ENCODE measurements at regions of chr2 and their contacts with region 1.

Region 1: GRCh38 chr2:86808315-86809161 is 17.8 kb upstream of the CD8A start:
- DNase-seq: peak; percentile 96
- H3K4me3 Mint-ChIP-seq: peak overlapping the region; percentile 75
- H3K27ac Mint-ChIP-seq: no peak overlapping the region
- H3K4me1 Mint-ChIP-seq: peaks cover 17% of the 10 kb centered on the region
- H3K27me3 Mint-ChIP-seq: peaks cover 38% of the 10 kb centered on the region

Region 2: GRCh38 chr2:86221066-86221684 is 587.4 kb before region 1 on chr2:
- CTCF ChIA-PET with region 1: no interaction called
- intact Hi-C with region 1: loop called (anchors 1 kb)
- DNase-seq: peak; percentile 80
- H3K4me3 Mint-ChIP-seq: no peak overlapping the region
- H3K27ac Mint-ChIP-seq: no peak overlapping the region
- H3K4me1 Mint-ChIP-seq: peaks cover 16% of the 10 kb centered on the region
- H3K27me3 Mint-ChIP-seq: no peaks in the 10 kb centered on the region

Region 3: GRCh38 chr2:86396291-86396785 is 412.2 kb before region 1 on chr2:
- CTCF ChIA-PET with region 1: no interaction called
- intact Hi-C with region 1: loop called (anchors 10 kb)
- DNase-seq: peak; percentile 57
- H3K4me3 Mint-ChIP-seq: no peak overlapping the region
- H3K27ac Mint-ChIP-seq: peak overlapping the region; percentile 15
- H3K4me1 Mint-ChIP-seq: peaks cover 17% of the 10 kb centered on the region
- H3K27me3 Mint-ChIP-seq: no peaks in the 10 kb centered on the region

Region 4: DNA sequence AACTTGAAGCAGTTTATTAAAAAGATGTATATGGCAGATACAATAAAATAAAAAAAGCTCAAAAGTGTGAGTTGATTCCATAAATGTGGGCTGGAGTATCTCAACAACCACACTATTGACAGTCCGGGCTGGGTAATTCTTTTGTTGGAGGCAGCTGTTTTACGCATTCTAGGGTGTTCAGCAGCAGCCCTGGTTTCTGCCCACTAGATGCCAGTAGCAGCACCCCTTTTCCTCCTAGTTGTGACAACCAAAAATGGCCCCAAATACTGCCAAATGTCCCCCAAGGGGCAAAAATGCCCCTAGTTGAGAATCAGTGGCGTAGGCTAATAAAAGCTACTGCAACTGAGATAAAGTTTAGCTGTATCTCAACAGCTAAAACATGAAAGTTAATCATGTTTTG is 290.1 kb before region 1 on chr2:
- CTCF ChIA-PET with region 1: no interaction called
- intact Hi-C with region 1: loop called (anchors 1 kb)
- DNase-seq: peak; percentile 50
- H3K4me3 Mint-ChIP-seq: no peak overlapping the region
- H3K27ac Mint-ChIP-seq: no peak overlapping the region
- H3K4me1 Mint-ChIP-seq: no peaks in the 10 kb centered on the region
- H3K27me3 Mint-ChIP-seq: no peaks in the 10 kb centered on the region

Region 5: DNA sequence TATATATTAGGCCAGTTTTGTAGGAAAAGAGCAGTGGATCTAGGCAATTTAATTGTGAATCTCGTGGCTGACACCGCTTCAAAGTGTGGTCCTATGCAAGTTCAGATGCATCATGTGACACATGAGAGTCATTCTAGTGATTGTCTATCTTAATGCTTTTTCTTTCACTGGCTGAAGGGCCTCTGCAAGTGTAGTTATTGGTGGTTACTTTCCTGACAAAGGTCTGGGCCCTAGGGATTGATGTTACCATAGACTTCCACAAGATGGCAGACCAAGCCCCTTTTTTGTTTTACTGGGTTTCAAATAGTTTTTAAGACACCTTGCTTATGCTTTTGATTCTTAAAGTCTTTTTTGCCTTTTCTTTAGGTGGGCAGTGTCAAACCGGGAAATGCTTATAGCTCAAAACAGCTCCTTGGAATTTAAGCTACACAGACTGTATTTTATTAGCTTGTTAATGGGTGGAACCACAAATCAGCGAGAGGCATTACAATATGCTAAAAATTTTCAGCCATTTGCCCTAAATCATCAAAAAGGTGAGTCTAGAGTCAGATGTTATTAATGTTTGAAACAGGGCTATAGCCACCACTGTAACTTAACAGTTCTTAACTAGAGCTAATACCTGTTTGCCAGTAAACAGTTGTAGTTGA is 43.8 kb before region 1 on chr2:
- CTCF ChIA-PET with region 1: interaction called, 8 read pairs
- intact Hi-C with region 1: loop called (anchors 1 kb)
- DNase-seq: peak; percentile 44
- H3K4me3 Mint-ChIP-seq: no peak overlapping the region
- H3K27ac Mint-ChIP-seq: no peak overlapping the region
- H3K4me1 Mint-ChIP-seq: peaks cover 19% of the 10 kb centered on the region
- H3K27me3 Mint-ChIP-seq: no peaks in the 10 kb centered on the region

Measured in activated naive CD4-positive, alpha-beta T cell treated with anti-CD3 and anti-CD28 coated beads for 36 hours (primary cell).